PC-9 (cell line): ENCODE measurements at regions of chr10 and their contacts with region 1.

Region 1: DNA sequence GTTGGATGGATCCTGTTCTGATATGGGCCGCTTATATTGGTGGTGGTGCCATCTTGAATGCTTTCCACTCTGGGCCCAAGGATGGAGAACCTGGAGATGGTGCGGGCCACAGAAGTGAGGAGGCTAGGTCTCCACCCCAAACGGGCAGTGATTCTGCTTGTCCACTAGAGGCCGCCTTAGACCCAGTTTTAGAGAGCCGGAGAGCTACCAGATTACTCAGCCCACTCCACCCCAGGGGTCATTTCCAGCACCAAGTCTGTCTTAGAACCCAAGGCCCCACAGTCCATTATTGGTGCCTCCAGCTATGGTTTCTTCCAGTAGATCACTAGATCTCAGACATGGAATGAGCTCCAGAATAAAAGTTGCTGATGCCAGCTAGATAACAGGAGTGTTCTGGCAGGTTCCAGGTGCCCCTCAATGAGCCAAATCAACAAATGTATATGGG is 11.8 kb upstream of the CAMK2G start:
- DNase-seq: peak; percentile 59 to 76
- H3K4me3 ChIP-seq: no peak overlapping the region
- H3K27ac ChIP-seq: peak overlapping the region; percentile 97
- H3K4me1 ChIP-seq: peaks cover 58% of the 10 kb centered on the region
- H3K27me3 ChIP-seq: no peaks in the 10 kb centered on the region
- CTCF ChIP-seq: peak; percentile 96

Region 2: GRCh38 chr10:73899423-73899822 is 13.3 kb after region 1 on chr10:
- CTCF ChIA-PET with region 1: interaction called, 8 read pairs
- POLR2A ChIA-PET with region 1: interaction called, 87 read pairs
- intact Hi-C with region 1: loop called (anchors 1 kb)
- DNase-seq: peak; percentile 87 to 99
- H3K4me3 ChIP-seq: peak overlapping the region; percentile 4; the same call in 1 of the 2 replicates
- H3K27ac ChIP-seq: peak overlapping the region; percentile 98
- H3K4me1 ChIP-seq: peaks cover 83% of the 10 kb centered on the region
- H3K27me3 ChIP-seq: no peaks in the 10 kb centered on the region
- CTCF ChIP-seq: no peak

Region 3: DNA sequence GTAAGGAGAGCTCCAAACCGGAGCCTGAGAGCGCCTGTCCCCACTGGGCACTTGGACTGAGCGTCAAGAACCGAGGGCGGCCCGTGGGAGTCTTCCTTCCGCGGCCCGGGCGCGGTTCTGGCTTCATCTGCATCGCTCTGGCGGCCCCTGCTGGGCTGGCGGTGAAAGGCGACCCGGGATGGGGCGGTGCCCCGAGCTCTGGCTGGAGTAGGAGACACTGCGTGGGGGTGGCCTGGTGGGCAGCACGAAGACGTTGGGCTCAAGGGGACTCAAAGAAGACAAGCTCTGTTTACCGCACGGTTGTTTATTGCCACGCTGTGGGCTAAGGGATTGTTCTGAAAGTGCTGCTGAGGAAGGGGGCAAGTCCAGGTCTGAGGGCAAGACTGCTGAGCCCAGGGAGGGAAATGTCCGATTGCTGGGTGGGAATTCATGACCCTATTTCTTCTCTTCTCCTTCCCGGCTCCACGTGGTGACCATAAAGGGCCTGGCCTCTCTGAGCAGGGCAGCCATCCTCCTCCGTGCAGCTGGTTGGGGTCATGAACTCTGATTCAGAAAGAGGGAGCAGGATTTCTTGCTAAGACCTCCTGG is 54.6 kb after region 1 on chr10:
- CTCF ChIA-PET with region 1: interaction called, 58 read pairs
- POLR2A ChIA-PET with region 1: interaction called, 10 read pairs
- intact Hi-C with region 1: loop called (anchors 1 kb)
- DNase-seq: peak; percentile 57 to 87
- H3K4me3 ChIP-seq: peak overlapping the region; percentile 44; the same call in 1 of the 2 replicates
- H3K27ac ChIP-seq: peak overlapping the region; percentile 64
- H3K4me1 ChIP-seq: peaks cover 38% of the 10 kb centered on the region
- H3K27me3 ChIP-seq: no peaks in the 10 kb centered on the region
- CTCF ChIP-seq: peak; percentile 96

Region 4: GRCh38 chr10:73997787-73998622 is 111.9 kb after region 1 on chr10 and contains the start of gene VCL:
- CTCF ChIA-PET with region 1: interaction called, 6 read pairs
- POLR2A ChIA-PET with region 1: interaction called, 29 read pairs
- intact Hi-C with region 1: loop called (anchors 1 kb)
- DNase-seq: peak; percentile 93 to 100
- H3K4me3 ChIP-seq: peak within 1 kb of the TSS; percentile 90
- H3K27ac ChIP-seq: peak within 1 kb of the TSS; percentile 79
- H3K4me1 ChIP-seq: peaks cover 41% of the 10 kb centered on the region
- H3K27me3 ChIP-seq: no peaks in the 10 kb centered on the region
- CTCF ChIP-seq: no peak
- total RNA-seq, gene VCL: 208 and 225 TPM in 2 replicates

Region 5: GRCh38 chr10:74058658-74059057 is 172.6 kb after region 1 on chr10:
- CTCF ChIA-PET with region 1: interaction called, 9 read pairs
- POLR2A ChIA-PET with region 1: interaction called, 10 read pairs
- intact Hi-C with region 1: loop called (anchors 1 kb)
- DNase-seq: no peak
- H3K4me3 ChIP-seq: no peak overlapping the region
- H3K27ac ChIP-seq: peak overlapping the region; percentile 92; the same call in 1 of the 2 replicates
- H3K4me1 ChIP-seq: peaks cover 50% of the 10 kb centered on the region
- H3K27me3 ChIP-seq: no peaks in the 10 kb centered on the region
- CTCF ChIP-seq: no peak; the same call in 1 of the 2 replicates

Region 6: GRCh38 chr10:74234569-74234968 is 348.5 kb after region 1 on chr10:
- CTCF ChIA-PET with region 1: interaction called, 3 read pairs
- POLR2A ChIA-PET with region 1: no interaction called
- intact Hi-C with region 1: loop called (anchors 5 kb)
- DNase-seq: no peak
- H3K4me3 ChIP-seq: no peak overlapping the region
- H3K27ac ChIP-seq: 0 out of 2 replicates have a peak overlapping the region, but pooled peaks have one; percentile 38
- H3K4me1 ChIP-seq: peaks cover 18% of the 10 kb centered on the region
- H3K27me3 ChIP-seq: no peaks in the 10 kb centered on the region
- CTCF ChIP-seq: peak; percentile 73